OCI-LY7 (cell line): ENCODE measurements at regions of chr4 and their contacts with region 1.

Region 1: GRCh38 chr4:48033825-48034413 is 17.3 kb downstream of the NIPAL1 start:
- DNase-seq: peak; percentile 79
- H3K4me3 ChIP-seq: no peak overlapping the region
- H3K27ac ChIP-seq: peak overlapping the region; percentile 7
- H3K4me1 ChIP-seq: peaks cover 71% of the 10 kb centered on the region
- CTCF ChIP-seq: peak; percentile 88

Region 2: DNA sequence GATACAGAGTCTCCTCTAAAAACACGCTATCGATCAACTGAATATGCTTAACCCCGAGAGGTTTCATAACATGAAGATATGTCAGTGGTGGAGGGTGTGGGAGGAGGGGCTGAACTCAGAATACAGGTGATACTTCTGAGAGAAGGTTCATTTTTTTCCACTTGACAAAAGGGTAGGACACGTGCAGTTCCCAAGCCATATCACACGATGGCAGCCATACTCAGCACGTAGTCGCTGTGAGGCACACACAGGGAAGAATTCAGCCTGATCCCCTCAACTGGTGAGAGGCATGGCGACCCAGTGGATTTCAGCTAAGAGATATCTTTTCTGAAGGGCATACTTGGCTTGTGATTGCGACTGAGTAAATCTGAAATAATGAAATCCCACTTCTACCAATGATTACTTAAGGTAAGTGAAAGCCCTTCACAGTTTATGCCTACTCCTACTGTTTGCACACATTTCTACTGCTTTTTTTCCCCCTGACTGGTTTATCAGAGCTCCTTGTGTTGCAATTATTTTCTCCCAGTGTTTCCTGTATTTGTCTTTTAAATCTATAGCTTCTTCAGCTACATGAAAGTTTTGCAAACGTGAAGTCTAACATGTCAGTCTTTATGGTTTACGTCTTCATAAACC is 329.1 kb before region 1 on chr4:
- CTCF ChIA-PET with region 1: no interaction called
- POLR2A ChIA-PET with region 1: no interaction called
- intact Hi-C with region 1: no loop called
- DNase-seq: peak; percentile 46
- H3K4me3 ChIP-seq: no peak overlapping the region
- H3K27ac ChIP-seq: no peak overlapping the region
- H3K4me1 ChIP-seq: no peaks in the 10 kb centered on the region
- CTCF ChIP-seq: peak; percentile 66

Region 3: GRCh38 chr4:47914220-47914925 is 119.5 kb before region 1 on chr4 and contains the start of gene NFXL1:
- CTCF ChIA-PET with region 1: no interaction called
- POLR2A ChIA-PET with region 1: interaction called, 4 read pairs
- intact Hi-C with region 1: loop called (anchors 5 kb)
- DNase-seq: peak; percentile 97
- H3K4me3 ChIP-seq: peak within 1 kb of the TSS; percentile 98
- H3K27ac ChIP-seq: peak within 1 kb of the TSS; percentile 54
- H3K4me1 ChIP-seq: peaks cover 33% of the 10 kb centered on the region
- CTCF ChIP-seq: no peak
- total RNA-seq, gene NFXL1: 17.7 and 17.9 TPM in 2 replicates